Mammary epithelial cell (primary cell): ENCODE measurements at regions of chr6 and their contacts with region 1.

Region 1: GRCh38 chr6:169723200-169723909 is 945 bp downstream of the PHF10 start:
- DNase-seq: peak; percentile 47
- H3K4me3 ChIP-seq: peak overlapping the region; percentile 47 to 74 (median 67)
- H3K27ac ChIP-seq: peak overlapping the region; percentile 69
- H3K4me1 ChIP-seq: peaks cover 17% of the 10 kb centered on the region
- H3K27me3 ChIP-seq: no peaks in the 10 kb centered on the region
- CTCF ChIP-seq: no peak

Region 2: GRCh38 chr6:169751242-169752073 is 28.1 kb after region 1 on chr6 and contains the starts of genes DYNLT2 and ERMARD:
- CTCF ChIA-PET with region 1: no interaction called
- dilution Hi-C with region 1: no loop called
- in situ Hi-C with region 1: no loop called
- intact Hi-C with region 1: loop called (anchors 2 kb)
- DNase-seq: peak; percentile 95
- H3K4me3 ChIP-seq: peak within 1 kb of the TSS; percentile 90 to 100 (median 96)
- H3K27ac ChIP-seq: peak within 1 kb of the TSS; percentile 84
- H3K4me1 ChIP-seq: peaks cover 16% of the 10 kb centered on the region
- H3K27me3 ChIP-seq: no peaks in the 10 kb centered on the region
- CTCF ChIP-seq: peak in 1 of 2 donors; percentile 32
- total RNA-seq, gene DYNLT2: 0.67 to 0.80 TPM
- total RNA-seq, gene ERMARD: 19.2 to 32.4 TPM

Region 3: DNA sequence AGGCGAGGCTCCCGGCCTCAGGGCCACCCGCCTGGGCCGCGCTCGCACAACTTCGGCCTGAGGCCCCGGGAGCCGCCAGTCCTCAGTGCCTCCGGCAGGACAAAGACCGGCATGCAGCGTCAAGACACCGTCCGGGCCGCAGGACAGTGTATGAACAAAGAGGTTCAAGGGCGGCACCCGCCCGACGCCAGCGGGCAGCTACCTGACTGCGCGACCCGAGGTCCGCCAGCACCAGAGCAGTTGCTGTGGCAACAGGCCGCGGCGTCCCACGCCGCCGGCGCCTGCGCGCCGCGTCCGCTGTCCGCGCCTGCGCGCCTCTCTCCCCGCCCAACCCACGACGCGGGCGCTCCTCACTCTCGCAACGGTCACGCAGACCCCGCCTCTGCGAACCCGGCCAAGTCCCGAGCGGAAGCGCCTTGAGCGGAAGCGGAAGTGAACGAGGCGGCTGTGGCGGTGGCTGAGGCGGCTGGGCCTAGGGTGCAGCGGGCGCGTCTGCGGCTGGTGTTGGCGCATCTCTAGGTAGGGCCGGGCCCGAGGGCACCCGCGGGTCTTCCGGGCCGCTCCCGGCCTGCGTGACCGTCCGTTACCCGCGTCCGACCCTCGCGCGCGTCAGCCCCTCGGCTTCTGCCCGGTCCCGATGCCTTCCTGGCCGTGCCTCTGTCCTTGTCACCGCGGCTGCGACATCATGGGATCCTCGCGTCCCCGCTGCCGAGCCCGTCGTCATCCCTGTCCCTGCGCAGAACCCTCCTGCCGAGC is 583.1 kb after region 1 on chr6 and contains the start of gene FAM120B:
- CTCF ChIA-PET with region 1: no interaction called
- dilution Hi-C with region 1: no loop called
- in situ Hi-C with region 1: no loop called
- intact Hi-C with region 1: loop called (anchors 10 kb)
- DNase-seq: peak; percentile 93
- H3K4me3 ChIP-seq: peak within 1 kb of the TSS; percentile 72 to 98 (median 98)
- H3K27ac ChIP-seq: peak within 1 kb of the TSS; percentile 78
- H3K4me1 ChIP-seq: peaks cover 22% of the 10 kb centered on the region
- H3K27me3 ChIP-seq: no peaks in the 10 kb centered on the region
- CTCF ChIP-seq: no peak
- total RNA-seq, gene FAM120B: 27.3 to 29.7 TPM